ENCODE measurements at regions of chr3 and their contacts with region 1.

Region 1: DNA sequence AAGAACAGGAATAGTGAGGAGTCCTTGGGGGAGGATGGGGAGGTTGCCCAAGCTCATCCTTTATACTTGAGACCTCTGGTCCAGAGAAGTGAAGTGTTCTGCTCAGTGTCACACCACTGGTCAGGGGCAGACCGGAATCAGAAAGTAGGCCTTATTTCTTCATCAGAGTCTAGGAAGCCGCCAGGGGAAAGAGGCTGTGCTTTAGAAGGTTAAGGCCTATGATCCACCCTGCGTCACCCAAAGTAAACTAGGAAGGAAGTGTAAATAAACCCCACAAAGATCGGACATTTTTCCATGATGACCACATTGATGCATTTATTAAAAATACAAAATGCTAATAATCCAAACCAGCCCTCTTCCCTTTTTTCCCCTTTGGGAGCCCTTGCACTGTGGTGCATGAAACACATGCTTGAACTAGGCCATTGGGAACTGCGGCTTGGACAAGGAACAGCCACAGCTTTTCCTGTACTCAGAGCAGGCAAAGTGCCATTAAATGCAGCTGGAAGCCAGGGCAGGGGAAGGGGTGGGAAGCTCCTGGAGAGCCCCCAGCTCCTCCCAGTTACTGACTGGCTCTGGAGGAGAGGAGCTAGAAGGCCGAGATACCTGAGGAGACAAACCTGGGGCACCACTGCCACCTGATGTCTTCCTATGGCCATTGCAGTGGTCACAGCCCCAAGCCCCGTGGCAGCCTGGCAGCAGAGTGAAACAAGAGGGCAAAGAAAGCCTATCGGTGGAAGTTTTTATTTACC is 37.0 kb downstream of the CDC25A start:
- DNase-seq: peak; percentile 66 to 91 (median 78)
- ATAC-seq: peak; percentile 98 to 100 (median 99)
- H3K4me3 ChIP-seq: no peak overlapping the region
- H3K27ac ChIP-seq: no peak overlapping the region
- H3K4me1 ChIP-seq: no peaks in the 10 kb centered on the region
- H3K27me3 ChIP-seq: no peaks in the 10 kb centered on the region
- CTCF ChIP-seq: peak; percentile 41 to 78 (median 69)

Region 2: GRCh38 chr3:47841786-47842349 is 309.4 kb before region 1 on chr3:
- intact Hi-C with region 1: loop called in 2 of 3 experiments (anchors 5 to 10 kb)
- DNase-seq: no peak
- ATAC-seq: no peak
- H3K4me3 ChIP-seq: no peak overlapping the region
- H3K27ac ChIP-seq: no peak overlapping the region
- H3K4me1 ChIP-seq: no peaks in the 10 kb centered on the region
- H3K27me3 ChIP-seq: no peaks in the 10 kb centered on the region
- CTCF ChIP-seq: no peak

Region 3: DNA sequence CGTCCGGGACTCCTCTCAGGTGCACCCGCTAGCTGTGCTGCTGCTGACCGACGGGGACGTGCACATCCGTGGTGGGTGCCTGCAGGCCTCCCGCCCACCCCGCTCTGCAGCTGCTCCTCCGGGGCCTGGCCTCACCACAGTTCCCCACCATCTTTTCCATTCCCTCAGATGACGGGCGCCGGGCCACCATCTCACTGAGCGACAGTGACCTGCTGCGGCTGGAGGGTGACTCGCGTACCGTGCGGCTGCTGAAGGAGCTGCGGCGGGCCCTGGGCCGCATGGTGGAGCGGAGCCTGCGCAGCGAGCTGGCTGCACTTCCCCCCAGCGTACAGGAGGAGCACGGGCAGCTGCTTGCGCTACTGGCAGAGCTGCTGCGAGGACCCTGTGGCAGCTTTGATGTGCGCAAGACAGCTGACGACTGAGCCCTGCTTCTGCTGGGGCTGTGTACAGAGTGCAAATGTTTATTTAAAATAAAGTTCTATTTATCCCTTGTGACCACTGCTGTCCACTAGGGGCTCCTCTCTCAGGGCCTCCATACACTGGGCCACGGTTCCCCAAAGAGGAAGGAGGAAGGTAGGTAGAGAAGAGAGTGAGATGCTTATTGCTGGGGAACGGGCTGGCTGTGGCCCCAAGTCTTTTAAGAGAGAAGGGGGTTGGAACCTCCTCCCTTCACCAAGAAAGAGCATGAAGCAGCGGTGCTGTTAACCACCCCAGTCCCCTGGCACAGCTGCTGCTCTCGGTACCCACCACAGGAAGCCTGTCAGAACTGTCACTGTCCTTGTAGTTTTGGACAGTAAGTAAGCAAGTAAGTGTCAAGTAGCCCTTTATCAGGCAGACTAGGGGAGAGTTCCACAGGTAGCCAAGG is 301.3 kb before region 1 on chr3:
- intact Hi-C with region 1: loop called in 1 of 3 experiments (anchors 10 kb)
- DNase-seq: no peak
- ATAC-seq: peak; percentile 15 to 50 (median 46)
- H3K4me3 ChIP-seq: no peak overlapping the region
- H3K27ac ChIP-seq: no peak overlapping the region
- H3K4me1 ChIP-seq: no peaks in the 10 kb centered on the region
- H3K27me3 ChIP-seq: no peaks in the 10 kb centered on the region
- CTCF ChIP-seq: peak in 1 of 4 donors; percentile 17

Region 4: DNA sequence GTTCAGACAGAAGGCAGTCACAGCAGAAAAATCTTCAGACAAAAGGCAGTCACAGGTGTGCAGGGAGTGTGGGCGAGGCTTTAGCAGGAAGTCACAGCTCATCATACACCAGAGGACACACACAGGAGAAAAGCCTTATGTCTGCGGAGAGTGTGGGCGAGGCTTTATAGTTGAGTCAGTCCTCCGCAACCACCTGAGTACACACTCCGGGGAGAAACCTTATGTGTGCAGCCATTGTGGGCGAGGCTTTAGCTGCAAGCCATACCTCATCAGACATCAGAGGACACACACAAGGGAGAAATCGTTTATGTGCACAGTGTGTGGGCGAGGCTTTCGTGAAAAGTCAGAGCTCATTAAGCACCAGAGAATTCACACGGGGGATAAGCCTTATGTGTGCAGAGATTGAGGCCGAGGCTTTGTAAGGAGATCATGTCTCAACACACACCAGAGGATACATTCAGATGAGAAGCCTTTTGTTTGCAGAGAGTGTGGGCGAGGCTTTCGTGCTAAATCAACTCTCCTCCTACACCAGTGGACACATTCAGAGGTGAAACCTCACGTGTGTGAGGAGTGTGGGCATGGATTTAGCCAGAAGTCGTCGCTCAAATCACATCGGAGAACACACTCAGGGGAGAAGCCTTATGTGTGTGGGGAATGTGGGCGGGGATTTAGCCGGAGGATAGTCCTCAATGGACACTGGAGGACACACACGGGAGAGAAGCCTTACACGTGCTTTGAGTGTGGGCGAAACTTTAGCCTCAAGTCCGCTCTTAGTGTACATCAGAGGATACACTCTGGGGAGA is 117.3 kb after region 1 on chr3:
- intact Hi-C with region 1: no loop called
- DNase-seq: no peak
- ATAC-seq: peak in 3 of 4 donors; percentile 36 to 71 (median 67)
- H3K4me3 ChIP-seq: no peak overlapping the region
- H3K27ac ChIP-seq: no peak overlapping the region
- H3K4me1 ChIP-seq: peaks cover under 1 to 10% (median 9%) of the 10 kb centered on the region in 3 donors
- H3K27me3 ChIP-seq: no peaks in the 10 kb centered on the region
- CTCF ChIP-seq: no peak

Region 5: DNA sequence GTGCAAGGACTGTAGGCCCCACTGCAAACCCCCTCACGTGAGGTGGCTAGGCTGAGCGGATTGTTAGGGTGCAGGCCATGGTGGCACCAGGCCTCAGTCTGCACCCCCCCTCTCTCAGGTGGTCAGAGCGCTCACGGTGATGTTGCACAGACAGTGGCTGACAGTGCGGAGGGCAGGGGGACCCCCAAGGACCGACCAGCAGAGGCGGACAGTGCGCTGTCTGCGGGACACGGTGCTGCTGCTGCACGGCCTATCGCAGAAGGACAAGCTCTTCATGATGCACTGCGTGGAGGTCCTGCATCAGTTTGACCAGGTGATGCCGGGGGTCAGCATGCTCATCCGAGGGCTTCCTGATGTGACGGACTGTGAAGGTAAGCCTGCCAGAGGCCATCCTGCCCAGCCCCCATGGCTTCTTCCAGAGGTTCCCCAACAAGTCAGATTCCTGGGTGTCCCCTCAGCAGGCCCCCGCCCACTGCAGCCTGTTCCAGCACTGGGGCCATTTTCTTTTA is 313.5 kb after region 1 on chr3:
- intact Hi-C with region 1: no loop called
- DNase-seq: peak in 4 of 6 donors; percentile 35 to 86 (median 54)
- ATAC-seq: no peak
- H3K4me3 ChIP-seq: no peak overlapping the region
- H3K27ac ChIP-seq: peak overlapping the region; percentile 99 to 100 (median 100)
- H3K4me1 ChIP-seq: peaks cover 22 to 30% (median 27%) of the 10 kb centered on the region in 3 donors
- H3K27me3 ChIP-seq: no peaks in the 10 kb centered on the region
- CTCF ChIP-seq: no peak